Caco-2 (cell line): ENCODE measurements at regions of chr16 and their contacts with region 1.

Region 1: DNA sequence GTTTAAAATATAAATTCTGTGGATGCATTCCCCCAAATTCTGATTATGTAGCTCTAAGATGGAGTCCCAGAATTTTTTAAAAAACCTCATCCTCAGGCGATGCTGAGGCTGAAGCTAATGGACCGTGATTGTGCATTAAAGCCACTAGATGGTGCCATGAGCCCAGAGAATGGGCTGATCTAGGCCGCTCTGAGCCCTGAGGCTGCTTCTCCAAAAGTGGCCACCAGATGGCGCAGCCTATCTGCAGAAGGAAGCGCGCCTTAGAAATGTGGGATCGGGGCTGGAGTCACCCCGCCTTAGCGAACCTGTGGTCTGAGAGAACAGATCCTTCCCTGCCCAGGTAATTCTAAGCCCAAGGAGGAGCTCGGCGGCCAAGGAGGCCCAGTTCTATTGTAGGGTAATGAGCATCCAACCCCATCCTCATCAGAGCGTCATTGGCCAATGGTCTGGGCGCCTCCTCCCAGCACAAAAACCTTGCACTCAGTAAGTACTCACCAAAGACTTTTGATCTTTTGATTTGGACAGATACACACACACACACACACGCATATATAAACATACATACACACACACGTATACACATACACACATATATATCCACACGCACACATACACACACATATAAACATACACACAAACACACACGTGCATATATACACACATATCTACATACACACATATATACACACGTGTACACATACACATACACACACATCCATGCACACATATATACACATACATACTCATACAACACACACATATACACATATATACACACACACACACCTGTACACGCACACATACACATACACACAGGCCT is 13.7 kb upstream of the MMP2 start:
- DNase-seq: peak; percentile 86 to 91
- H3K4me3 ChIP-seq: no peak overlapping the region
- H3K4me3 Mint-ChIP-seq: no peak overlapping the region
- H3K27ac Mint-ChIP-seq: no peak overlapping the region
- H3K4me1 ChIP-seq: peaks cover 4% of the 10 kb centered on the region; the same call in 1 of the 2 replicates
- H3K4me1 Mint-ChIP-seq: peaks cover 12% of the 10 kb centered on the region
- H3K27me3 ChIP-seq: no peaks in the 10 kb centered on the region
- H3K27me3 Mint-ChIP-seq: no peaks in the 10 kb centered on the region
- CTCF ChIP-seq: peak; percentile 99 to 100

Region 2: GRCh38 chr16:54326266-54326662 is 1139.0 kb before region 1 on chr16:
- CTCF ChIA-PET with region 1: no interaction called
- POLR2A ChIA-PET with region 1: no interaction called
- intact Hi-C with region 1: no loop called
- DNase-seq: no peak
- H3K4me3 ChIP-seq: no peak overlapping the region
- H3K4me3 Mint-ChIP-seq: no peak overlapping the region
- H3K27ac Mint-ChIP-seq: no peak overlapping the region
- H3K4me1 ChIP-seq: no peaks in the 10 kb centered on the region
- H3K4me1 Mint-ChIP-seq: no peaks in the 10 kb centered on the region
- H3K27me3 ChIP-seq: no peaks in the 10 kb centered on the region
- H3K27me3 Mint-ChIP-seq: no peaks in the 10 kb centered on the region
- CTCF ChIP-seq: no peak

Region 3: GRCh38 chr16:55056585-55057401 is 408.5 kb before region 1 on chr16:
- CTCF ChIA-PET with region 1: no interaction called
- POLR2A ChIA-PET with region 1: no interaction called
- intact Hi-C with region 1: no loop called
- DNase-seq: peak; percentile 39 to 54
- H3K4me3 ChIP-seq: peak overlapping the region; percentile 27
- H3K4me3 Mint-ChIP-seq: peak overlapping the region; percentile 74
- H3K27ac Mint-ChIP-seq: peak overlapping the region; percentile 11
- H3K4me1 ChIP-seq: no peaks in the 10 kb centered on the region; the same call in 1 of the 2 replicates
- H3K4me1 Mint-ChIP-seq: no peaks in the 10 kb centered on the region
- H3K27me3 ChIP-seq: no peaks in the 10 kb centered on the region
- H3K27me3 Mint-ChIP-seq: no peaks in the 10 kb centered on the region
- CTCF ChIP-seq: no peak

Region 4: DNA sequence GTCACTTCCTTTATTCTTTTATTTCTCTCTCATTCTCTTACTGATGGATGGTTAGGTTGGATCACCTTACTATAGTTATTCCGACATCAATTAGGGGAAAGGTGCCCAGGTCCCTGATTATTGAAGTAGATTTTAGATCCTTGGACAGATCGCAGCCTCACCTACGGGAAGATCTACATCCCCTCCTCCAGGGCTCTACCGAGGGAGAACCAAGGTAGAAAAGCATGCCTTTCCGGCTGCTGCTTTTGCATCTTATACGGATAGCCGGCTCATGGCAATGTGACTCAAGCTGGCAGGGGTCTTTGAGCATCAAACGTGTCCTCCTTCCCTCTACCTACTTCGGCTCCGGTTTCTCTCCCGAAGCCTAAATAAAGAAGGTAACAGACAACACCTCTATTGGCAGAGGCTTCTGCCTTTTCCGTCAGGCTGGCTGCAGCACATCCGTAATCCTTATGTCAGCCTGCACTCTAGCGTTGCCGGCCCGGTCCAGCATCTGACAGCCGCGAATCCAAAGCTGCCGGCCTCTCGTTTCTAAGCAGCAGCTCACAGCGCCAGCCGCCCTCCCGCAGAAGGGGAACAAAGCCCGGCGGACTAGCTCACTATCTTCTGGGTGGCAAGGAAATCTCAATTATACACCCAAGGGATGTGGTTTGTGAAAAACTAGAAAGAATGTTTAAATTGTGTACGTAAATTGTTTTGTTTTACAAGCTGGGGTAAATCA is 94.4 kb before region 1 on chr16:
- CTCF ChIA-PET with region 1: no interaction called
- POLR2A ChIA-PET with region 1: interaction called, 11 read pairs
- intact Hi-C with region 1: no loop called
- DNase-seq: peak; percentile 68 to 73
- H3K4me3 ChIP-seq: no peak overlapping the region
- H3K4me3 Mint-ChIP-seq: no peak overlapping the region
- H3K27ac Mint-ChIP-seq: no peak overlapping the region
- H3K4me1 ChIP-seq: no peaks in the 10 kb centered on the region
- H3K4me1 Mint-ChIP-seq: peaks cover 8% of the 10 kb centered on the region
- H3K27me3 ChIP-seq: no peaks in the 10 kb centered on the region
- H3K27me3 Mint-ChIP-seq: peaks cover 7% of the 10 kb centered on the region
- CTCF ChIP-seq: peak in 1 of 2 experiments; percentile 73

Region 5: DNA sequence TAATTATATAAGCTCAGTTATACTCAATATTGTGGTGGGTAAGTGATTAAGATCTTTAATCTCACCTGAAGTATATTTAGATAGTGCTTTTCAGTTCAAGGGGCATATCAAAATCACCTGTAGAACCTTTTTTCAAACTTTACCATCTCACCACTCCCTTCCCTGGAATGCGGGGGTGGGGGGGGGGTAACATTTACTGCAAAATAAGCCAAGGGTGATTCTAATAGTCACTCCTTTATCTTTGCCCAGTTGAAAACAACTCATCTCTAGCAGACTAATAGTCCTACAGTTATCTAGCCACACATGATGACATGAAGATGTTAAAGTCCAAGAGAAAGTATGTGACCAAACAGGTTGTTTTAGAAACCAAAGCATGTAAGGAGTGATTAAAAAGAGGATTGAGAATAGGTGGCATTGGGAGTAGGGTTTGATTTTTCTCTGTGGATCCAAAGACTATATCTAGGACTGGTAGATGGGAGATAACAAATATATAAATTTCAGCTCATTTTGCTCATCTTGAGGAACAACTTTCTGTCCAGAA is 65.1 kb after region 1 on chr16:
- CTCF ChIA-PET with region 1: interaction called, 3 read pairs
- POLR2A ChIA-PET with region 1: no interaction called
- intact Hi-C with region 1: loop called (anchors 1 kb)
- DNase-seq: peak; percentile 65 to 84
- H3K4me3 ChIP-seq: no peak overlapping the region
- H3K4me3 Mint-ChIP-seq: peak overlapping the region; percentile 63
- H3K27ac Mint-ChIP-seq: peak overlapping the region; percentile 82
- H3K4me1 ChIP-seq: peaks cover 34% of the 10 kb centered on the region
- H3K4me1 Mint-ChIP-seq: peaks cover 15% of the 10 kb centered on the region
- H3K27me3 ChIP-seq: no peaks in the 10 kb centered on the region
- H3K27me3 Mint-ChIP-seq: no peaks in the 10 kb centered on the region
- CTCF ChIP-seq: no peak

Region 6: GRCh38 chr16:55643161-55643970 is 178.1 kb after region 1 on chr16:
- CTCF ChIA-PET with region 1: interaction called, 20 read pairs
- POLR2A ChIA-PET with region 1: no interaction called
- intact Hi-C with region 1: loop called (anchors 1 kb)
- DNase-seq: peak in 1 of 2 experiments; percentile 47
- H3K4me3 ChIP-seq: no peak overlapping the region
- H3K4me3 Mint-ChIP-seq: no peak overlapping the region
- H3K27ac Mint-ChIP-seq: no peak overlapping the region
- H3K4me1 ChIP-seq: no peaks in the 10 kb centered on the region
- H3K4me1 Mint-ChIP-seq: no peaks in the 10 kb centered on the region
- H3K27me3 ChIP-seq: no peaks in the 10 kb centered on the region
- H3K27me3 Mint-ChIP-seq: peaks cover 14% of the 10 kb centered on the region
- CTCF ChIP-seq: peak in 1 of 2 experiments; percentile 40

Region 7: DNA sequence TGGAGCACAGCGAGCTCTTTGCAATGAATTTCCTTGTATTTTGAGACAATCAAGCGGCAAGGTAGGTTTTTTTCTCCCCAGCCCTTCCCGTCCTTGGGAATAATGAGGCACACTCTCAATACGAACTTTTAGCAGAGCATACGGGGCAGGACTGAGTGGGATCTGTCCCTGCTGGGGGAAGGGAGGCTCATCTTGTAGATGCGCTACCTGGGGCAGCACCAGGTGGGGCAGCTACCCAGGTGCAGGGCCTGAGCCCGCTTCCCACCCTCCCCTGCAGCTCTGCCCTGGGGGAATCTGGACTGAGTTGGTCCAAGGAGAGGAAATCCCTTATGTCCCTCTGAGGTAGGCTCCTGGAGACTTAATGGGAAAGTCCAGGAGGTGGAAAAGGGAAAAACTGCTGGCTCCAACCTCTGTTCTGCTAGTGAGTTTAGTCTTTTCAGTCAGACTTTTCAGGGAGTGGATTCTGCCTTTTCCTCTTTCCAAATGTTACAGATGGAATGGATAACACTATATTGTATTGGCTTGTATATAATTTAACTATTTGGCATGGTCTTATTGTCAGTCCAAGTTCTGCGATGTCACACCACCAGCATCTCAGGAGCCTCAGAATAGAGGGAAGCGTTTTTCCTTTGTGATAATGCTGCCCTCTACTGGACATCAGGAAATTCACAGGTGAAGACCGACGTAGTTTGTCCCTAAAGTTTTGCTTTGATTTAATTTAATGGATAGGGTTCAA is 377.2 kb after region 1 on chr16:
- CTCF ChIA-PET with region 1: interaction called, 4 read pairs
- POLR2A ChIA-PET with region 1: no interaction called
- intact Hi-C with region 1: loop called (anchors 2 kb)
- DNase-seq: peak in 1 of 2 experiments; percentile 62
- H3K4me3 ChIP-seq: no peak overlapping the region
- H3K4me3 Mint-ChIP-seq: no peak overlapping the region
- H3K27ac Mint-ChIP-seq: no peak overlapping the region
- H3K4me1 ChIP-seq: no peaks in the 10 kb centered on the region
- H3K4me1 Mint-ChIP-seq: no peaks in the 10 kb centered on the region
- H3K27me3 ChIP-seq: no peaks in the 10 kb centered on the region; the same call in 1 of the 2 replicates
- H3K27me3 Mint-ChIP-seq: peaks cover 16% of the 10 kb centered on the region
- CTCF ChIP-seq: peak; percentile 70 to 84